Calu3 (cell line): ENCODE measurements at regions of chr19 and their contacts with region 1.

Region 1: DNA sequence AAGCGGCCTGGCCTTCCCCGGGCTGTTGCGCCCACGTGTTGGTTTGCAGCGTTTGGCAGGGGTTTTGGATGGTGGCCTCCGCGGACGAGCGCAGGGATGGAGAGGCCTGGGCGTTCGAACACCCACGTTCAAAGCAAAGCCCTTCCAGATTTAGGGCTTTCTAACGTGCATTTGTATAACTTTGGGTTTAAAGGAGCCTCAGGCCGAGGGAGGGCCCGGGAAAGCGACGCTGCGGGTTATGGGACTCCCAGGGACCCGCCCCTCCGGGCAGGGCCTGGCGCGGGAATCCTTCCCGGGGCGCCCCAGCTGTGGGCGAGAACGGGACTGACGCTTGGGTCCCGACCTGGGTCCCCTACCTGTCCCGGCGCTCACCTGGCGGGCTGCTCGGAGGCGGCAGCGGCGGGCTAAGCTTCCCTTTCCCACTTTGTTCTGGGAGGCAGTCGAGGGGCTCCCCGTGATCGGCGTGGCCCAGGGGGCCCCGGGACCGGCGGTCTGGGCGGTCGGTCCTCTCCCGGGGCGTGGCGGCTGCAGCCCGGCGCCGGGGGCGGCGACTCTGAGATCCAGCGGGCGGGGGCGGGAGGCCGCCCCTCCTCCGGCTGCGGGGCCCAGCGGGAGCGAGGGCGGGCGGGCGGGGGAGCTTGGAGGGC is at the start of gene FBXO17:
- DNase-seq: peak; percentile 71
- H3K4me3 Mint-ChIP-seq: peak within 1 kb of the TSS; percentile 76
- H3K27ac Mint-ChIP-seq: peak within 1 kb of the TSS; percentile 88
- H3K4me1 Mint-ChIP-seq: peaks cover 41% of the 10 kb centered on the region
- H3K27me3 Mint-ChIP-seq: no peaks in the 10 kb centered on the region
- CTCF ChIP-seq: no peak
- total RNA-seq, gene FBXO17: 20.1 and 24.2 TPM in 2 replicates

Region 2: DNA sequence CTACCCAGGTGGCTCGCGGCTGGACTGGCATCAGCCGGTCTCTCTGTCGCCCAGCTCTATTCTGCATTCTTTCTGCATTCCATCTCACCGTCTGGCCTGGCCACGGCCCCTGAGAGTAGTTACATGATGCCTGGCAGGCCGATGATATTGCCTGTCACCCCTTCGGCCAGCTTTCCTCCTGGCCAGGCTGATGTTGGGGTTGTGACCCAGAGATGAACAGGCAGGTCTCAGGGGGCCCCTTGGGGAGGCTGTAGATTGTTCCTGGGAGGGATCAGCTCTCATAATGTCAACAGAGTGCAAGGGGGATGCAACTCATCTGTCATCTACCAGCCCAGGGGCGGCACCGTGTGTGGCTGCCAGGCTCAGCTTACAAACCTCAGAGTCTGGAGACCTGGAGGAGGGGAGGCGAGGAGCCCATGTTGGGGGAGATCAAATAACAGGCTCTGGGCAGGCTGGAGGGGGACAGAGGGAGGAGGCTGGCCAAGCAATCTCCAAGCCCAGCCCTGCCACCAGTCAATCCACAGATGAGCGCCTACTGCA is 13.8 kb after region 1 on chr19:
- CTCF ChIA-PET with region 1: interaction called, 10 read pairs
- intact Hi-C with region 1: no loop called
- DNase-seq: peak; percentile 61
- H3K4me3 Mint-ChIP-seq: no peak overlapping the region
- H3K27ac Mint-ChIP-seq: no peak overlapping the region
- H3K4me1 Mint-ChIP-seq: peaks cover 24% of the 10 kb centered on the region
- H3K27me3 Mint-ChIP-seq: peaks cover 13% of the 10 kb centered on the region
- CTCF ChIP-seq: no peak